ENCODE measurements at regions of chr1 and their contacts with region 1.

Region 1: GRCh38 chr1:179081687-179082332 is at the start of gene TOR3A:
- DNase-seq: peak; percentile 51 to 82 (median 58)
- ATAC-seq: peak; percentile 80
- H3K4me3 ChIP-seq: peak within 1 kb of the TSS; percentile 93
- H3K4me3 Mint-ChIP-seq: peak within 1 kb of the TSS; percentile 91 to 100 (median 95)
- H3K27ac ChIP-seq: peak within 1 kb of the TSS; percentile 76
- H3K27ac Mint-ChIP-seq: peak within 1 kb of the TSS; percentile 84 to 99 (median 95)
- H3K4me1 ChIP-seq: peaks cover 4 to 11% of the 10 kb centered on the region in 2 donors
- H3K4me1 Mint-ChIP-seq: peaks cover 14 to 38% (median 25%) of the 10 kb centered on the region in 7 donors
- H3K27me3 ChIP-seq: no peaks in the 10 kb centered on the region
- H3K27me3 Mint-ChIP-seq: no peaks in the 10 kb centered on the region
- total RNA-seq, gene TOR3A: 18.8 to 43.8 (median 21.7) TPM

Region 2: GRCh38 chr1:178725603-178726517 is 355.9 kb before region 1 on chr1:
- CTCF ChIA-PET with region 1: no interaction called
- POLR2A ChIA-PET with region 1: no interaction called
- intact Hi-C with region 1: loop called in 1 of 2 experiments (anchors 2 kb)
- DNase-seq: peak; percentile 25 to 83 (median 73)
- ATAC-seq: peak; percentile 85
- H3K4me3 ChIP-seq: peak overlapping the region; percentile 93
- H3K4me3 Mint-ChIP-seq: peak overlapping the region; percentile 79 to 96 (median 88)
- H3K27ac ChIP-seq: peak overlapping the region; percentile 86
- H3K27ac Mint-ChIP-seq: peak overlapping the region; percentile 14 to 95 (median 88)
- H3K4me1 ChIP-seq: peaks cover 0 to 5% of the 10 kb centered on the region in 2 donors
- H3K4me1 Mint-ChIP-seq: peaks cover 11 to 39% (median 27%) of the 10 kb centered on the region in 7 donors
- H3K27me3 ChIP-seq: no peaks in the 10 kb centered on the region
- H3K27me3 Mint-ChIP-seq: peaks cover 0 to 29% (median 0%) of the 10 kb centered on the region in 5 donors

Region 3: DNA sequence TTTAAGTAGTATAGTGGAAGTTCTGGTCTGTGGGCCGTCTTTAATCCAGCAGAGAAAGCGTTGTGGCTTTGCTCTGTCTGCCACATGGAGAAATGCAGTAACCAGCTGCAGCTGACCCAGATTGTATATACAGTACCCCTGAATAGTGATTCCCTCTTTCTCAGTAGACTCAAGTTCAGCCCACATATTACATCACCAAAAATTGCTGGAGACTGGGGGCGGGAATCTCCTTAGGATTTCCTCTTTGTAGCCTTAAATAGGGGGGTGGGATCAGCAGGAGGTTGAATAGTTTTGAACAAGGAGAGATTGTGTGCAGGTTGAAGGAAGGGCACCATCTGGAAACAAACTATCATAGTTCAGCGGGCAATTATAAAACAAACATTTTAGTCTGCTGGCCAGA is 210.9 kb before region 1 on chr1 and contains the start of gene ANGPTL1:
- CTCF ChIA-PET with region 1: no interaction called
- POLR2A ChIA-PET with region 1: no interaction called
- intact Hi-C with region 1: no loop called
- DNase-seq: no peak
- ATAC-seq: no peak
- H3K4me3 ChIP-seq: no peak within 1 kb of the TSS
- H3K4me3 Mint-ChIP-seq: no peak within 1 kb of the TSS
- H3K27ac ChIP-seq: no peak within 1 kb of the TSS
- H3K27ac Mint-ChIP-seq: no peak within 1 kb of the TSS
- H3K4me1 ChIP-seq: no peaks in the 10 kb centered on the region
- H3K4me1 Mint-ChIP-seq: peaks cover 0 to 7% (median 0%) of the 10 kb centered on the region in 7 donors
- H3K27me3 ChIP-seq: no peaks in the 10 kb centered on the region
- H3K27me3 Mint-ChIP-seq: no peaks in the 10 kb centered on the region
- total RNA-seq, gene ANGPTL1: not detected

Region 4: DNA sequence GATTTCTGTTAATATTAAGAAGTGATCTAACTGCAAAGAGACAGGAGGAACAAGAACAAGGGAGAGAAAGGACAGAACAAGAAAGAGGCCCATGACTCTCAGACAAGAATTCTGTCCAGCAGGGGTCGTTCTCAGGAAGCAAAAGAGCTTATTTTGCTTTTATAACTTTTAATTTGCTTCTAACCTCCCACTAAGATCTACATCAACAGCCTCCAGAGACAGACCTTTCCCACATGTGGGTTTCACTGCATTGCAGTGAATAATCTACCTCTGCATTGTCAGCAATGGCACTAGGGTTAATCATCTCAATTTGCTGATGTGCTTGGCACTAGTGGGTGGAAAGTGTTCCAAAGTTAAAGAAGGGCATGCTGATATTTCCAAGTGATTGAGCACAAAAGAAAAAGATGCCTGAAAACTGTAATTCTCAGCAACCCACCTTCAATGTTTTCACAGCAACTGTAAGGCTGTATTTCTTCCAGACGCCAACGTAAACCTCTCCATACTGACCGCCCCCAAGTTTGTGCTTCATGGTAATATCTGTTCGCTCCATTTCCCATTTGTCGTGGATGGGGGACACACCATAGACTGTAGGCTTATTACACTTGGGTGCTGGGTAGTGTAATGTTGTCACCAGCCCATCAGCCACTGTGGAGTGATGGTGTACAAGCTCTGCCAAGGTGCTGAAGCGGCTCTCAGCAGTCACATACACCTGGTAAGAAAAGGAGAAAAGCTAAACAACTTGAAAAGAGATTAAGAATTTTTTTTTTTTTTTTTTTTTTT is 39.5 kb after region 1 on chr1:
- CTCF ChIA-PET with region 1: interaction called, 3 read pairs
- POLR2A ChIA-PET with region 1: no interaction called
- intact Hi-C with region 1: loop called in 1 of 2 experiments (anchors 2 kb)
- DNase-seq: peak in 7 of 9 donors; percentile 22 to 58 (median 46)
- ATAC-seq: peak; percentile 47
- H3K4me3 ChIP-seq: no peak overlapping the region
- H3K4me3 Mint-ChIP-seq: no peak overlapping the region
- H3K27ac ChIP-seq: no peak overlapping the region
- H3K27ac Mint-ChIP-seq: no peak overlapping the region
- H3K4me1 ChIP-seq: no peaks in the 10 kb centered on the region
- H3K4me1 Mint-ChIP-seq: peaks cover 0 to 12% (median 3%) of the 10 kb centered on the region in 7 donors
- H3K27me3 ChIP-seq: no peaks in the 10 kb centered on the region
- H3K27me3 Mint-ChIP-seq: no peaks in the 10 kb centered on the region

Region 5: GRCh38 chr1:179229214-179230140 is 147.7 kb after region 1 on chr1 and contains the start of gene ABL2:
- CTCF ChIA-PET with region 1: no interaction called
- POLR2A ChIA-PET with region 1: no interaction called
- intact Hi-C with region 1: loop called (anchors 1 to 2 kb)
- DNase-seq: peak; percentile 20 to 73 (median 41)
- ATAC-seq: peak; percentile 77
- H3K4me3 ChIP-seq: peak within 1 kb of the TSS; percentile 66
- H3K4me3 Mint-ChIP-seq: peak within 1 kb of the TSS; percentile 85 to 97 (median 92)
- H3K27ac ChIP-seq: peak within 1 kb of the TSS; percentile 81
- H3K27ac Mint-ChIP-seq: peak within 1 kb of the TSS; percentile 81 to 95 (median 89)
- H3K4me1 ChIP-seq: peaks cover 0 to 14% of the 10 kb centered on the region in 2 donors
- H3K4me1 Mint-ChIP-seq: peaks cover 20 to 43% (median 39%) of the 10 kb centered on the region in 7 donors
- H3K27me3 ChIP-seq: no peaks in the 10 kb centered on the region
- H3K27me3 Mint-ChIP-seq: peaks cover 0 to 5% (median 0%) of the 10 kb centered on the region in 5 donors
- total RNA-seq, gene ABL2: 10.3 to 20.1 (median 18.6) TPM

Region 6: GRCh38 chr1:179447489-179447888 is 365.7 kb after region 1 on chr1:
- CTCF ChIA-PET with region 1: no interaction called
- POLR2A ChIA-PET with region 1: no interaction called
- intact Hi-C with region 1: loop called in 1 of 2 experiments (anchors 5 kb)
- DNase-seq: peak in 3 of 9 donors; percentile 0 to 13 (median 2)
- ATAC-seq: no peak
- H3K4me3 ChIP-seq: no peak overlapping the region
- H3K4me3 Mint-ChIP-seq: no peak overlapping the region
- H3K27ac ChIP-seq: no peak overlapping the region
- H3K27ac Mint-ChIP-seq: no peak overlapping the region
- H3K4me1 ChIP-seq: no peaks in the 10 kb centered on the region
- H3K4me1 Mint-ChIP-seq: no peaks in the 10 kb centered on the region
- H3K27me3 ChIP-seq: no peaks in the 10 kb centered on the region
- H3K27me3 Mint-ChIP-seq: peaks cover 2 to 37% (median 22%) of the 10 kb centered on the region in 5 donors

Region 7: DNA sequence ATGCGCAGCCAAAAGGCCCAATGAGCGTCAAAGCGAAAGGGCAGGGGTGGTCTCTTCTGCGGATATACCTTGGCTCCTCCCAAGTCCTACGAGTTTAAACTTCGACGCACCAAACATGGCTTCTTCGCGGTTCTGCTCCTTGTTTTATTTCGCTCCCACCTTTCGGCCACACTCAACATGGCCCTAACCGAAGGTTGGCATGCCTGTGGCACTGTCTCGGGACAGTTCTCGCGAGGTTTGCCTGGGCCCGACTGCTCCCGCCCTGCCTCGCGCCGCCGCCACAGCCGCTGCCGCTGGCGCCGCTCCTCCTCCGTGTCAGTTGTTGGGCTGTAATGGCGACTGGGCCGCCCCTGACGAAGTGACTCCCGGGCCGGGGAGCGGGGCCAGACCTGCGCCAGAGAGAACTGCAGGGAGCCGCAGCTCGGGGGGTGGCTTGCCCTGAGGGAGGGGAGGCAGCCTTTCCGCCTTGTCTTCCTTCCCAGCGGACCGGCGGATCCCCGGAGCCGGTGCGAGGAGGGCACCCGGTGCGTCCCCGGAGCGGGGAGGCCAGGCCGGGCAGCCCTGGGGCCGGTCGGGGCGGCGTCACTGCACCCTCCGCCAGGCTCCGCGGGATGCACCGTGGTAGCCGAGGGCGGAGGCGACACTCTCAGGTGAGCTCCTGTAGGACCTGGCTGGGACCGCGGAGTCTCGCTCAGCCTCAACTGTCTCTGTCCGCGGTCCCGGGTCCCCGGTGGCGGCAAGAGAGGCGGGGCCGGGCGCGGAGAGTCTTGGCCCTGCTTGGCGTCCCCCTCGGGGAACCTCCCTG is 872.9 kb after region 1 on chr1 and contains the start of gene CEP350:
- CTCF ChIA-PET with region 1: no interaction called
- POLR2A ChIA-PET with region 1: no interaction called
- intact Hi-C with region 1: loop called in 1 of 2 experiments (anchors 1 kb)
- DNase-seq: peak; percentile 93 to 99 (median 98)
- ATAC-seq: peak; percentile 92
- H3K4me3 ChIP-seq: peak within 1 kb of the TSS; percentile 67
- H3K4me3 Mint-ChIP-seq: peak within 1 kb of the TSS; percentile 81 to 97 (median 93)
- H3K27ac ChIP-seq: peak within 1 kb of the TSS; percentile 95
- H3K27ac Mint-ChIP-seq: peak within 1 kb of the TSS; percentile 91 to 99 (median 97)
- H3K4me1 ChIP-seq: peaks cover 32 to 42% of the 10 kb centered on the region in 2 donors
- H3K4me1 Mint-ChIP-seq: peaks cover 34 to 72% (median 62%) of the 10 kb centered on the region in 7 donors
- H3K27me3 ChIP-seq: no peaks in the 10 kb centered on the region
- H3K27me3 Mint-ChIP-seq: no peaks in the 10 kb centered on the region
- total RNA-seq, gene CEP350: 56.1 to 90.1 (median 64.4) TPM